ENCODE measurements at regions of chr4 and their contacts with region 1.

Region 1: GRCh38 chr4:39977489-39978377 is at the start of gene PDS5A:
- DNase-seq: peak; percentile 91
- H3K4me3 ChIP-seq: peak within 1 kb of the TSS; percentile 54 to 98 (median 92)
- H3K27ac ChIP-seq: peak within 1 kb of the TSS; percentile 97 to 98 (median 98)
- H3K4me1 ChIP-seq: peaks cover 11 to 33% (median 14%) of the 10 kb centered on the region in 4 donors
- H3K27me3 ChIP-seq: no peaks in the 10 kb centered on the region
- CTCF ChIP-seq: peak; percentile 69 to 96 (median 83)
- EP300 ChIP-seq: no peak
- POLR2A ChIP-seq: peak; percentile 12
- total RNA-seq, gene PDS5A: 62.1 to 74.0 (median 68.5) TPM

Region 2: DNA sequence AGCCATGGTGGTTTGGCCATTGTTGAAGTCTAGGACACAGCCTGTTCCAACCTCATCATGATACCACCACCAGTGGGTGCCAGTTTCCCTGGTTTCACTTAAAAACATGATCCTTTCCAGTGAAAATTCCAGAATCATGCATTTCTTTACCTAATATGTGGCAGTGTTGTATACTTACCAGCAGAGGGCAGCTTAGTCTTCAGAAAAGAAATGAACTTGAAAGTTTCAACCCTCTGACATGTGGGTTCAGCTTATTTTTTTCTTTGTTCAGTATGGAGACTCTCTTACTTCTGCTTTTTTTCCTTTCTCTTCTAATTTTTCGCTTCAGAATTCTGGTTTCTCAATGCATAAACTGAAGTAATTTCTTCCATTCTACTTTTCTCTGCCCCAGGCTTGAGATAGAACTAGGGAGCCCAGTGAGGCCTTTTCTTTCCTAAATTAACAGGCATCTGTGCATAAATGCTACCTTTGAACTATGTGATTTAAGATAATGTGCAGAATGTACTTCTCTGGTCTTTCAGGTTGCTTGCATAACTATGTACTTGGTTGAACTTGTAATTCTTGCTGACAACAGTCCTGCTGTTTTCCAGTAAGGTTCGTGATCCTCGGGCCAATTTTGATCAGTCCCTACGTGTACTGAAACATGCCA is 508.2 kb before region 1 on chr4:
- in situ Hi-C with region 1: loop called in 1 of 4 experiments (anchors 10 kb)
- intact Hi-C with region 1: loop called (anchors 10 kb)
- DNase-seq: no peak
- H3K4me3 ChIP-seq: no peak overlapping the region
- H3K27ac ChIP-seq: peak overlapping the region; percentile 17 to 61 (median 39)
- H3K4me1 ChIP-seq: peaks cover 0 to 22% (median 7%) of the 10 kb centered on the region in 4 donors
- H3K27me3 ChIP-seq: no peaks in the 10 kb centered on the region
- CTCF ChIP-seq: peak; percentile 72 to 91 (median 82)
- EP300 ChIP-seq: no peak
- POLR2A ChIP-seq: no peak

Region 3: DNA sequence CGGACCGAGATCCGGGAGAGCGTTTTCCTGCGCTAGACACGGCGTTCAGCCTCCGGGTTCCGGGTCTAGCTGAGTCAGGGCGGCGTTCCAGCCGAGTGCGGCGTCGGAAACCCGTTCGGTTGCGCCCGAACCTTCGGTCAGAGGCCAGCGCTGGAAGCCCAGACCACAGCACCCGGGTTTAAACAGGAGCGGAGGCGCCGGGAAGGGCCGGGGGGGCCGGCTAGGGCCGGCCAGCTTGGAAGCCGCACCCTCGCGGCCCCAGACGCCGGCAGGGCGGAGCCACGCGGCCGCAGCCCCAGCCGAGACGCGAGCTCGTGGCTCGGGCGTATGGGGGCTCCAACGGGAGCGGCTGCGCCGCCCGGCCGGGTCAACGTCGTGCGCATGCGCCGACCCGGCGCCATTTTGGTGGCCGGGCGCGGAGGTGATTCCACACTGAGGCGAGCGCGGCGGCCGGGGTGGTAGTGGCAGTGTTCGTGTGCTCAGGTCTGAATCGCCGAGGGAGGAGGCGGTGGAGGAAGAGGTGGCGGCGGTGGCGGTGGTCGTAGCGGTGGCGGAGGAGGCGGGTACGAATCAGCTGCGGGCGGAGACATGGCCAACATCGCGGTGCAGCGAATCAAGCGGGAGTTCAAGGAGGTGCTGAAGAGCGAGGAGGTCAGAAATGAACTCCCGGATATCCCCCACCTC is 279.9 kb before region 1 on chr4 and contains the start of gene UBE2K:
- in situ Hi-C with region 1: loop called (anchors 5 to 25 kb)
- intact Hi-C with region 1: loop called (anchors 2 kb)
- DNase-seq: peak; percentile 91
- H3K4me3 ChIP-seq: peak within 1 kb of the TSS; percentile 57 to 91 (median 71)
- H3K27ac ChIP-seq: peak within 1 kb of the TSS; percentile 92 to 96 (median 94)
- H3K4me1 ChIP-seq: peaks cover 5 to 44% (median 29%) of the 10 kb centered on the region in 4 donors
- H3K27me3 ChIP-seq: no peaks in the 10 kb centered on the region
- CTCF ChIP-seq: peak in 1 of 5 experiments; percentile 16
- EP300 ChIP-seq: no peak
- POLR2A ChIP-seq: peak; percentile 82
- total RNA-seq, gene UBE2K: 18.9 to 48.6 (median 37.3) TPM

Region 4: GRCh38 chr4:39706334-39706733 is 271.4 kb before region 1 on chr4:
- in situ Hi-C with region 1: loop called in 1 of 4 experiments (anchors 10 kb)
- intact Hi-C with region 1: loop called (anchors 2 kb)
- DNase-seq: peak; percentile 59
- H3K4me3 ChIP-seq: no peak overlapping the region
- H3K27ac ChIP-seq: peak overlapping the region; percentile 20 to 44 (median 34)
- H3K4me1 ChIP-seq: peaks cover 8 to 44% (median 15%) of the 10 kb centered on the region in 4 donors
- H3K27me3 ChIP-seq: no peaks in the 10 kb centered on the region
- CTCF ChIP-seq: no peak
- EP300 ChIP-seq: no peak
- POLR2A ChIP-seq: no peak

Region 5: DNA sequence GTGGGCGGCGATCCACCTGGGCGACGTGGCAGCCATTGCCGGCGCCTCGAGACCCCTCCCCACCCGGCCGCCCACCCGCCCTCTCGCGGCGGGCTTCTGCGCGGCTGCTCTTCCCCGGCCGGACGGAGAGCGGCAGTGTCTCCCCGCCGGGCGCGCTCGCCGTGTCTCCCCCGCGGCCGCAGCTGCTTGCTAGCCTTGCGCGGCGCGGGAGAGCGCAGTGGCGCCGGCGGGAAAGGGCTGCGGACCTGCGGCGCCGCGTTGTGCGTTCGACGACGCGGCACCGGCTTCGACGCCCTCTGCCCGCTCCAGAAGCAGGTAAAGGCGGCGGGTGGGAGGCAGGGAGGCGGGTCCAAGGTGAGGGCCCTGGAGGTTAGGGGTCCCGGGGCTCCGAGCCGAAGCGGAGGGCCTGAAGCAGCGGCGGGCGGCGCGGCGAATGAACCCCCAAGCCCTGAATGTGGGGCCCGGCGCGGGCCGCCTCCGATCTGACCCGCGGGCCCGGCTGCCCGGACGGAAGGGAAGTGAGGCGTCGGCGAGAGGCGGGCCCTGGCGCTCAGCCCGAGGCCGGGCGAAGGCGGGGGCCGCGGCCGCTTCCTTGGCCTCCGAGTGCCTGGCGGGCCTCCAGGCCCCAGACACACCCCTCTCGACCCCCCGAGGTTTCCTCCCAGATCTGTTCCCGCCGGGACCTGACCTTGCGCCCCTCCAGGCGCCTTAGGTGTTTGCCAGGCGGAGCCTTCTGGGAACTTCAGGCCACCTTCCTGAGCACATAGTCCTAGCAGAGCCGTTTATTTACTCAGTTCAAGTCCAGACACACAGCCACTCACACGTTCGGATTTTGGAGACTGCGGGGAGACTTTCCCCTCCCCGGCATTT is 79.2 kb after region 1 on chr4 and contains the start of gene N4BP2:
- in situ Hi-C with region 1: no loop called
- intact Hi-C with region 1: loop called (anchors 5 kb)
- DNase-seq: peak; percentile 82
- H3K4me3 ChIP-seq: peak within 1 kb of the TSS; percentile 85 to 96 (median 90)
- H3K27ac ChIP-seq: peak within 1 kb of the TSS; percentile 99 to 100 (median 100)
- H3K4me1 ChIP-seq: peaks cover 15 to 33% (median 22%) of the 10 kb centered on the region in 4 donors
- H3K27me3 ChIP-seq: no peaks in the 10 kb centered on the region
- CTCF ChIP-seq: peak in 4 of 5 experiments; percentile 58 to 82 (median 67)
- EP300 ChIP-seq: no peak
- POLR2A ChIP-seq: peak; percentile 86
- total RNA-seq, gene N4BP2: 7.9 to 19.5 (median 12.5) TPM

Region 6: DNA sequence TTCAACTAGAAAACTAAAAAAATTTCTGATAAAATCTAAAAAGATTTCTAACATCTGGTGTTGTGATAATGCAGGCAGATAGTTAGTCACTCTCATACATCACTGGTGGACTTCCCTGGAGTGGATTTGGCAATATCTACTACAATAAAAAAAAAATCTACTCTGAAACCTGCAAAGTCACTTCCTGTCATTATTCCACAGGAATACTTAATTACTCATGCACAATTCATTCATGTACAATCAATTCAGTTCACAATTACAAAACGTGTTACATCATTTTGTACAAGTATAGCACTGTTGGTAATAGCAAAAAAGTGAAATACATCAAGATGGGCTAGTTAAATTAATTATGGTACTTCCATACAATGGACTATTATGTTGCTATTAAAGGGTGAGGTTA is 202.6 kb after region 1 on chr4:
- in situ Hi-C with region 1: no loop called
- intact Hi-C with region 1: no loop called
- DNase-seq: no peak
- H3K4me3 ChIP-seq: no peak overlapping the region
- H3K27ac ChIP-seq: no peak overlapping the region
- H3K4me1 ChIP-seq: peaks cover 0 to 6% (median 0%) of the 10 kb centered on the region in 4 donors
- H3K27me3 ChIP-seq: peaks cover 36% of the 10 kb centered on the region
- CTCF ChIP-seq: no peak
- EP300 ChIP-seq: no peak
- POLR2A ChIP-seq: no peak